ENCODE measurements at regions of chr7 and their contacts with region 1.

Region 1: DNA sequence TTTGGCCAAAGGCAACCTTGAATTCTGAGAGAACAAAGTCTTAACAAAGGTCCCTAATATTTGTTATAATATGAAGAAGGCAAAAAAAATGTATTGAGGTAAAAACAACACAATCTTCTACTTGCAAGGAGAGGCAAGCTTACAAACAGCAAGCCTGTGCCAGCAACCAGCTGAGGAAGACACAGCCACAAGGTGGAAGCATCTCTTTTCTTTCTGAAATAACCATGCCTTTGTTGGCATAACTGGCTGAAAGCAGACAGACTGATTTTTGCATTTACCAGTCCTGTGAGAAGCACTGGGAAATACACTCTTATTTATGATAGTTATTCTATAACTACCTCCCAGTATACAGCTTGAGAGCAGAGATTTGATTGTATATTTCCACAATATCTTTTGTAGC is 292.0 kb downstream of the PHTF2 start:
- DNase-seq: no peak
- ATAC-seq: no peak
- H3K4me3 ChIP-seq: no peak overlapping the region
- H3K27ac ChIP-seq: no peak overlapping the region
- H3K4me1 ChIP-seq: no peaks in the 10 kb centered on the region
- H3K27me3 ChIP-seq: peaks cover 0 to 3% (median 0%) of the 10 kb centered on the region in 3 donors
- CTCF ChIP-seq: no peak

Region 2: DNA sequence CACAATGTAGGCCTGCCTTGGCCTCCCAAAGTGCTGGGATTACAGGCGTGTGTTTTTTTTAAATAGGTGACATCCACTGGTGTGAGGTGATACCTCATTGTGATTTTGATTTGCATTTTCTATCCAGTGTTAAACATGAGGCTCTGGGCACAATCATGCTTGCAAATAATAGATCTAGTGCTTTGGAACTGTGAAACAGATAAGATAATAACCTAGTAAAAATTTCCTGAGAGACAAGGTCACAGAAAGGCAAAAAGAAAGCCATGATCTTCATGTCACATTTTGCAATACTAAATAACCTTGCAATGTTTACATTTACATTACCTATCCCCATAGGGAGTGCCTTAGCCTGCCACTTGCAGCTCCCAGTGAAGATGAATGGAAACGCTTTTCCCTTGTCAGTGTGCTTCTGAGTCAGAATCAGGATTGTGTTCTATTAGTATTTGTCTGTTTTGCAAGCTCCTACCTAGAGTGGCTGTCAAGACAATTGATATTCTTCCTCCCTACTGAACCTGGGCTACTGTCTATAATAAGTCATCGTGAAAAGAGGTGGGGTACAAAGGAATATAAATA is 35.5 kb before region 1 on chr7:
- intact Hi-C with region 1: loop called in 1 of 2 experiments (anchors 1 kb)
- DNase-seq: no peak
- ATAC-seq: no peak
- H3K4me3 ChIP-seq: no peak overlapping the region
- H3K27ac ChIP-seq: no peak overlapping the region
- H3K4me1 ChIP-seq: no peaks in the 10 kb centered on the region
- H3K27me3 ChIP-seq: no peaks in the 10 kb centered on the region
- CTCF ChIP-seq: no peak